ENCODE measurements at regions of chr6 and their contacts with region 1.

Region 1: GRCh38 chr6:35457907-35458306 is 5.8 kb downstream of the FANCE start:
- DNase-seq: no peak
- H3K4me3 ChIP-seq: no peak overlapping the region
- H3K4me3 Mint-ChIP-seq: peak overlapping the region in 1 of 7 donors; percentile 37
- H3K27ac ChIP-seq: no peak overlapping the region
- H3K27ac Mint-ChIP-seq: peak overlapping the region in 1 of 8 donors; percentile 43
- H3K4me1 ChIP-seq: peaks cover 10% of the 10 kb centered on the region
- H3K4me1 Mint-ChIP-seq: peaks cover 17 to 24% (median 19%) of the 10 kb centered on the region in 3 donors
- H3K27me3 ChIP-seq: no peaks in the 10 kb centered on the region
- H3K27me3 Mint-ChIP-seq: no peaks in the 10 kb centered on the region

Region 2: GRCh38 chr6:35468181-35468979 is 10.5 kb after region 1 on chr6 and contains the start of gene RPL10A:
- CTCF ChIA-PET with region 1: interaction called, 35 read pairs
- POLR2A ChIA-PET with region 1: interaction called, 12 read pairs
- DNase-seq: peak; percentile 91 to 99 (median 95)
- H3K4me3 ChIP-seq: peak within 1 kb of the TSS; percentile 92
- H3K4me3 Mint-ChIP-seq: peak within 1 kb of the TSS; percentile 89 to 99 (median 97)
- H3K27ac ChIP-seq: peak within 1 kb of the TSS; percentile 87
- H3K27ac Mint-ChIP-seq: peak within 1 kb of the TSS; percentile 92 to 99 (median 98)
- H3K4me1 ChIP-seq: peaks cover 39% of the 10 kb centered on the region
- H3K4me1 Mint-ChIP-seq: peaks cover 35 to 43% (median 41%) of the 10 kb centered on the region in 3 donors
- H3K27me3 ChIP-seq: no peaks in the 10 kb centered on the region
- H3K27me3 Mint-ChIP-seq: peaks cover 0 to 5% of the 10 kb centered on the region in 2 donors
- total RNA-seq, gene RPL10A: 1,737 to 1,739 TPM

Region 3: GRCh38 chr6:35480169-35480568 is 22.3 kb after region 1 on chr6:
- CTCF ChIA-PET with region 1: no interaction called
- POLR2A ChIA-PET with region 1: no interaction called
- DNase-seq: peak in 1 of 5 donors; percentile 32
- H3K4me3 ChIP-seq: no peak overlapping the region
- H3K4me3 Mint-ChIP-seq: no peak overlapping the region
- H3K27ac ChIP-seq: no peak overlapping the region
- H3K27ac Mint-ChIP-seq: peak overlapping the region in 1 of 8 donors; percentile 54
- H3K4me1 ChIP-seq: no peaks in the 10 kb centered on the region
- H3K4me1 Mint-ChIP-seq: no peaks in the 10 kb centered on the region
- H3K27me3 ChIP-seq: no peaks in the 10 kb centered on the region
- H3K27me3 Mint-ChIP-seq: no peaks in the 10 kb centered on the region